ENCODE measurements at regions of chr2 and their contacts with region 1.

Region 1: DNA sequence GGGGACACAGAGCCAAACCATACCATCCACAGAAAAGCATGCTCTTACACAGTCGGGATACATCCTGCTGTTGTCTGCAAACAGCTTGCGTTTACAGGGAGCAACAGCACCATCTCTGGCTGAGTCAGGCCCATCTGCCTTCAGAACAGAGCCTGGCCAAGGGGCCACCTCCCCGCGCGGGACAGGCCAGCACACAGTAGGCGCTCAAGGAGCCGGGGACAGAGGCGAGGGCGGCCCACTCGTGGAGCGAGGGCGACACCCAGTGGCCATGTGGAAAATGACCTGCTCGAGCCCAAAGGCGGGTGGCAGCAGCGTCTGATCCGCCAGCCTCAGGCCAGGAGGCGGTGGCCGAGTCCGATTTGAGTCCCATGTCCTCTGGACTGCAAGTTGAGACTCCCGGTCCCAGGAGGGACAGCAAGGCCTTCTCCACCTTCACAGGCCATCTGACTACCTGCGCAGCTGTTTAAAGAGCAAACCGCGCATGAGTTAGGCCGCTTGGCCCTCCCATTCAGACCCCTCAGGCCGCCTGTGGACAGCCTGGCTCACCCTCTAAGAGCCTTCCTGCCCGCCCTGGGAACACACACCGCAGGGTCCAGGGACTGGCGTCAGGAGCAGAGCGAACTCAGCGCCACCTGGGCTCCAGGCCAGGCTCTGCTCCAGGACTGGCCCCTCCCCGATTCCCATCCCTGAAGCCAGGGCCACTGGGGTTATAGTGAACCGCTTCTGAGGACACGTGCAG is 38.3 kb downstream of the TTC32 start:
- DNase-seq: peak; percentile 23
- ATAC-seq: peak; percentile 94
- H3K4me3 ChIP-seq: no peak overlapping the region
- H3K27ac ChIP-seq: no peak overlapping the region
- H3K4me1 ChIP-seq: peaks cover 0 to 8% of the 10 kb centered on the region in 2 experiments; a peak in 1 of 4 replicates
- H3K27me3 ChIP-seq: no peaks in the 10 kb centered on the region
- CTCF ChIP-seq: peak; percentile 78 to 96 (median 93)
- POLR2A ChIP-seq: no peak
- RAD21 ChIP-seq: peak; percentile 100

Region 2: GRCh38 chr2:18387441-18388206 is 1475.8 kb before region 1 on chr2:
- CTCF ChIA-PET with region 1: no interaction called
- POLR2A ChIA-PET with region 1: no interaction called
- RAD21 ChIA-PET with region 1: no interaction called
- intact Hi-C with region 1: loop called (anchors 1 kb)
- DNase-seq: peak; percentile 68
- ATAC-seq: peak; percentile 93
- H3K4me3 ChIP-seq: no peak overlapping the region
- H3K27ac ChIP-seq: 0 out of 2 replicates have a peak overlapping the region, but pooled peaks have one; percentile 11
- H3K4me1 ChIP-seq: no peaks in the 10 kb centered on the region
- H3K27me3 ChIP-seq: peaks cover 20% of the 10 kb centered on the region
- CTCF ChIP-seq: peak; percentile 76 to 87 (median 82)
- POLR2A ChIP-seq: no peak
- RAD21 ChIP-seq: peak; percentile 83

Region 3: GRCh38 chr2:18520451-18521425 is 1342.7 kb before region 1 on chr2:
- CTCF ChIA-PET with region 1: interaction called, 7 read pairs
- POLR2A ChIA-PET with region 1: no interaction called
- RAD21 ChIA-PET with region 1: no interaction called
- intact Hi-C with region 1: loop called (anchors 1 kb)
- DNase-seq: peak; percentile 37
- ATAC-seq: peak; percentile 97
- H3K4me3 ChIP-seq: no peak overlapping the region
- H3K27ac ChIP-seq: no peak overlapping the region
- H3K4me1 ChIP-seq: no peaks in the 10 kb centered on the region
- H3K27me3 ChIP-seq: peaks cover 11% of the 10 kb centered on the region; the same call in 1 of the 2 replicates
- CTCF ChIP-seq: peak; percentile 67 to 91 (median 84)
- POLR2A ChIP-seq: no peak
- RAD21 ChIP-seq: peak; percentile 91

Region 4: GRCh38 chr2:18883616-18884456 is 979.6 kb before region 1 on chr2:
- CTCF ChIA-PET with region 1: no interaction called
- POLR2A ChIA-PET with region 1: no interaction called
- RAD21 ChIA-PET with region 1: no interaction called
- intact Hi-C with region 1: loop called (anchors 2 kb)
- DNase-seq: peak; percentile 7
- ATAC-seq: peak; percentile 54
- H3K4me3 ChIP-seq: no peak overlapping the region
- H3K27ac ChIP-seq: no peak overlapping the region
- H3K4me1 ChIP-seq: no peaks in the 10 kb centered on the region
- H3K27me3 ChIP-seq: no peaks in the 10 kb centered on the region
- CTCF ChIP-seq: peak; percentile 50 to 66 (median 56); a peak in 5 of 6 replicates
- POLR2A ChIP-seq: no peak
- RAD21 ChIP-seq: peak; percentile 75

Region 5: GRCh38 chr2:19362755-19363473 is 500.6 kb before region 1 on chr2:
- CTCF ChIA-PET with region 1: interaction called, 5 read pairs
- POLR2A ChIA-PET with region 1: no interaction called
- RAD21 ChIA-PET with region 1: no interaction called
- intact Hi-C with region 1: loop called (anchors 1 kb)
- DNase-seq: peak; percentile 69
- ATAC-seq: peak; percentile 81
- H3K4me3 ChIP-seq: peak overlapping the region; percentile 47 to 55
- H3K27ac ChIP-seq: no peak overlapping the region
- H3K4me1 ChIP-seq: peaks cover 0 to 17% of the 10 kb centered on the region in 2 experiments; a peak in 2 of 4 replicates
- H3K27me3 ChIP-seq: peaks cover 6% of the 10 kb centered on the region; the same call in 1 of the 2 replicates
- CTCF ChIP-seq: peak; percentile 77 to 87 (median 79)
- POLR2A ChIP-seq: no peak
- RAD21 ChIP-seq: peak; percentile 93

Region 6: DNA sequence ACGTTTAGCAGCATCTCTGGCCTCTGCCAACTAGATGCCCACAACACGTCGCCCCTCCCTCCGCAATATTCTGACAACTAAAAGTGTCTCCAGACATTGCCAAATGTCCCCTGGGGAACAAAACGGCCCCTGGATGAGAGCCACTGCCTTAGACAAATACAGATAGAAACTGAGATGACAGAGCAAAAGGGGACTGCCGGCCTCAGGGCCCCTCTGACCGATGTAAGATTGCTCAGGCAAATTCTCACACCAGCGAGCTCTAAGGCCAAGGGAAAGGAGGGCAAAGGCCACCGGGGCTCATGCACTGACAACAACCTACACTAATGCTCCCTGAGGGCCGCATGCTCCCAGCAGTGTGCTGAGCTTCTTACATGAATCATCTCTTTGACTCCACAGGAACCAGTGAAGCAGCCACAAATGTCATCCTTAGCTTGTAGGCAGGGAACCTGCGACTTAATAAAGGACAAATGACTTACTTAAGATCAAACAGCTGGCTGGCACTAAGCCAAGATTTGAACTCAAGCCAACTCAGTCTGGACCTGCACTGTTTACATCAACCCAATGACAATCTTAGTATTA is 190.2 kb before region 1 on chr2:
- CTCF ChIA-PET with region 1: no interaction called
- POLR2A ChIA-PET with region 1: no interaction called
- RAD21 ChIA-PET with region 1: no interaction called
- intact Hi-C with region 1: loop called (anchors 5 kb)
- DNase-seq: no peak
- ATAC-seq: peak; percentile 30; the same call in 1 of the 2 replicates
- H3K4me3 ChIP-seq: no peak overlapping the region
- H3K27ac ChIP-seq: no peak overlapping the region
- H3K4me1 ChIP-seq: peaks cover 3 to 19% of the 10 kb centered on the region in 2 experiments; a peak in 2 of 4 replicates
- H3K27me3 ChIP-seq: no peaks in the 10 kb centered on the region
- CTCF ChIP-seq: no peak
- POLR2A ChIP-seq: no peak
- RAD21 ChIP-seq: no peak